Dendritic cell treated with granulocyte-macrophage colony-stimulating factor and Interleukin-4, amounts not matched to agents 40 ng/mL and 50 ng/mL, for 4 days (primary cell): ENCODE measurements at regions of chr3 and their contacts with region 1.

Region 1: GRCh38 chr3:14261229-14261628 is 82.6 kb downstream of the LSM3 start:
- H3K4me3 Mint-ChIP-seq: no peak overlapping the region
- H3K27ac Mint-ChIP-seq: no peak overlapping the region
- H3K4me1 Mint-ChIP-seq: no peaks in the 10 kb centered on the region
- H3K27me3 Mint-ChIP-seq: peaks cover 7% of the 10 kb centered on the region

Region 2: GRCh38 chr3:14093831-14094230 is 167.4 kb before region 1 on chr3:
- intact Hi-C with region 1: no loop called
- H3K4me3 Mint-ChIP-seq: no peak overlapping the region
- H3K27ac Mint-ChIP-seq: no peak overlapping the region
- H3K4me1 Mint-ChIP-seq: no peaks in the 10 kb centered on the region
- H3K27me3 Mint-ChIP-seq: peaks cover 13% of the 10 kb centered on the region

Region 3: GRCh38 chr3:14467814-14468620 is 206.8 kb after region 1 on chr3:
- intact Hi-C with region 1: loop called (anchors 1 kb)
- H3K4me3 Mint-ChIP-seq: no peak overlapping the region
- H3K27ac Mint-ChIP-seq: no peak overlapping the region
- H3K4me1 Mint-ChIP-seq: peaks cover 6% of the 10 kb centered on the region
- H3K27me3 Mint-ChIP-seq: no peaks in the 10 kb centered on the region

Region 4: DNA sequence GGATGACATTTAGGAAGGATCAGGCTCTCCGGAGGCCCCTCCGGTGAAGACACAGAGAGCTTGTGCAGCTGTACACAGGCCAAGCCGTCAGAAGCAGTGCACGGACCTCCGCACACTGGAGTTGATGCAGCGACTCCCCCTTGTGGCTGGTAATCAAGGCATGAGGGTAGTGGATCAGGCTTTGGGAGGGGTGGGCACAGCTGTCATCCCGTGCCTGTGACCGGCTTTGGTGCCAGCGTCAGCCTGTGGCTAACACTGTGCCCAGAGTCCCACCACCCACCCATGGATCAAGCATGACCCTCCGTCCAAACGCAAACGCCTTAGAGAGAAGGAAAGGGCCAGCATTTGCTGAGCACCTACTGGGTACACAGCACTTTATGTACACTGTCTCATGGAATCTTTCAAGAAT is 287.1 kb after region 1 on chr3:
- intact Hi-C with region 1: loop called (anchors 1 kb)
- H3K4me3 Mint-ChIP-seq: no peak overlapping the region
- H3K27ac Mint-ChIP-seq: no peak overlapping the region
- H3K4me1 Mint-ChIP-seq: no peaks in the 10 kb centered on the region
- H3K27me3 Mint-ChIP-seq: peaks cover 50% of the 10 kb centered on the region